ENCODE measurements at regions of chr2 and their contacts with region 1.

Region 1: DNA sequence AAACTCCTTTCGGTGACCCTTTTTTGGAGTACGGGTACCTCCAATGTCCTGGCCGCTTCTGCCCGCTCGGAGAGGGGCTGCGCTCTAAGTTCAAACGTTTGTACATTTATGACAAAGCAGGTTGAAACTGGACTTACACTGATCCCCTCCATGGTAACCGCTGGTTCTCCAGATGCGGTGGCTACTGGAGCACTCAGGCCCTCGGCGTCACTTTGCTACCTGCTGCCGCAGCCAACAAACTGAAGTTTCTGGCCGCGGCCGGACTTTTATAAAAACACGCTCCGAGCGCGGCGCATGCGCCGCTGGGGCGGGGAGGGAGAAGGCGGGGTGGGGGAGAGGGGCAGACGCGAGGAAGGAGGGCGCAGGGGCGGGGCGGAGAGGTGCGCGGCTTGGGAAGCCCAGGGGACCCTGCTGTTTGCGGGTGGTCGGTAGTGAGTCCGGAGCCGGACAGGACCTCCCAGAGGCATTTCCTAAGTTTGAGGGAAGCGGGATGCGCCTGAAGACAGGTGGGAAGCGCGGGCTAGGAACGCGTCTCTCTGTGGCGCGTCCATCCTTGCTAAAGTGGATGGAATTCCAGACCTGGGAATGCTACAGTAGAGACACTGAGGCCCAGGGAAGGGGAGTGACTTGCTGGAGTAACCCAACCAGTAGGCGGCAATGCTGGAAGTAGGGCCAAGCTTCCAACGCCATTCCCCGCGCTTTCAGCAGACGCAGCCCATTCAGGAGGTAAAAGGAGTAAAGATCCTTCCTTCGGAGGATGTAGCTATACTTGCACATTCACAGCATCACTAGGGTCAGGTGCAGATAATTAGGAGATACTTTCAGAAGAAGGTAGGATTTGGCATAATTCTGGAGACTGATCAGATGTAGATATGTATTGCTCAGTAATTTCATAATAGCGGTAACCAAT is at the start of gene CXCR4:
- DNase-seq: peak; percentile 85
- H3K4me3 Mint-ChIP-seq: peak within 1 kb of the TSS; percentile 97
- H3K27ac Mint-ChIP-seq: peak within 1 kb of the TSS; percentile 98
- H3K4me1 Mint-ChIP-seq: peaks cover 73% of the 10 kb centered on the region
- H3K27me3 Mint-ChIP-seq: peaks cover 31% of the 10 kb centered on the region
- total RNA-seq, gene CXCR4: 83.3 and 86.3 TPM in 2 replicates

Region 2: GRCh38 chr2:134918526-134919340 is 1199.4 kb before region 1 on chr2 and contains the start of gene CCNT2:
- intact Hi-C with region 1: loop called (anchors 2 kb)
- DNase-seq: peak; percentile 100
- H3K4me3 Mint-ChIP-seq: peak within 1 kb of the TSS; percentile 96
- H3K27ac Mint-ChIP-seq: peak within 1 kb of the TSS; percentile 97
- H3K4me1 Mint-ChIP-seq: peaks cover 28% of the 10 kb centered on the region
- H3K27me3 Mint-ChIP-seq: peaks cover 11% of the 10 kb centered on the region
- total RNA-seq, gene CCNT2: 41.4 and 43.7 TPM in 2 replicates

Region 3: GRCh38 chr2:135820003-135820618 is 298.1 kb before region 1 on chr2:
- intact Hi-C with region 1: loop called (anchors 5 kb)
- DNase-seq: peak; percentile 75
- H3K4me3 Mint-ChIP-seq: peak overlapping the region; percentile 80
- H3K27ac Mint-ChIP-seq: peak overlapping the region; percentile 89
- H3K4me1 Mint-ChIP-seq: peaks cover 52% of the 10 kb centered on the region
- H3K27me3 Mint-ChIP-seq: no peaks in the 10 kb centered on the region

Region 4: DNA sequence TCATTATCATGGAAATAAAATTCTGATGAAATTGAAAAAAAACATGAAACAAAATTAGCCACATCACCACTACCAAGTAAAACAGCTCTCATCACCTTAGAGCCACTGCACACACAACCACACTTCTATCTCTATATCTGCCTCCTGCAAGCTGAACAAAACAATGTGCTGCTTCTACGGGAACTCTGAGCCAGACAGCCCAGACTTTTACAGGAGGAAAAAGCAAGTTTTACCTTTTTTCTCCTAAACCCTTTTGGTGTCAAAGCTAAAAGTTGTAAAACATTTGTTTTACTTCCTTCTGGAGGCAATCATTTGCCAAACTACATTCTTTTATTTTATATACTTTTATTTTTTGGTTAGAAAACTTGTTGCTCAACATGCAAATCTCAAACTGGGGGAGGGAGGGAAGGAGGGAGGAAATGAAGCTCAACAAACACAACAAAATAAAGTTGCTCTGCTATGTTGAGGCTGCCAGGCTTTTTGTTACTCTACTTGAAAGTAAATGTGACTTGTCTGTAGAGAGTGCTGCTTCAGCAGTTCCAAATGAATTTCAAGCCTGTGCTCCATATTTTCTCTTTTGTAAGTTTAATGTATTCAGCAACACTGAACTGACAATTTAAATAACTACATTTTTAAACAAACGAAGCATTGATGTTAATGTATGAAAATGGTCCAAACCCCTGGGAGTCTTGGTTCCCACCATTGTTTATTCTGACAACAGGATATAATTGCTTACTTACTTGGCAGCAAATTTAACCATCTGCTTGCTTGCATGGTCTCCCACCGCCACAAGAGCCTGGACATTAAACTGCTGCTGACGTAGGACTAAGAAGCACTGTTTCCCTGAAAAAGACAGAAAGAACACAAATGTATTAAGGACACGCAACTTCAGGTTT is 157.3 kb before region 1 on chr2:
- intact Hi-C with region 1: loop called (anchors 1 kb)
- DNase-seq: peak; percentile 16
- H3K4me3 Mint-ChIP-seq: peak overlapping the region; percentile 28
- H3K27ac Mint-ChIP-seq: peak overlapping the region; percentile 80
- H3K4me1 Mint-ChIP-seq: peaks cover 55% of the 10 kb centered on the region
- H3K27me3 Mint-ChIP-seq: no peaks in the 10 kb centered on the region

Region 5: DNA sequence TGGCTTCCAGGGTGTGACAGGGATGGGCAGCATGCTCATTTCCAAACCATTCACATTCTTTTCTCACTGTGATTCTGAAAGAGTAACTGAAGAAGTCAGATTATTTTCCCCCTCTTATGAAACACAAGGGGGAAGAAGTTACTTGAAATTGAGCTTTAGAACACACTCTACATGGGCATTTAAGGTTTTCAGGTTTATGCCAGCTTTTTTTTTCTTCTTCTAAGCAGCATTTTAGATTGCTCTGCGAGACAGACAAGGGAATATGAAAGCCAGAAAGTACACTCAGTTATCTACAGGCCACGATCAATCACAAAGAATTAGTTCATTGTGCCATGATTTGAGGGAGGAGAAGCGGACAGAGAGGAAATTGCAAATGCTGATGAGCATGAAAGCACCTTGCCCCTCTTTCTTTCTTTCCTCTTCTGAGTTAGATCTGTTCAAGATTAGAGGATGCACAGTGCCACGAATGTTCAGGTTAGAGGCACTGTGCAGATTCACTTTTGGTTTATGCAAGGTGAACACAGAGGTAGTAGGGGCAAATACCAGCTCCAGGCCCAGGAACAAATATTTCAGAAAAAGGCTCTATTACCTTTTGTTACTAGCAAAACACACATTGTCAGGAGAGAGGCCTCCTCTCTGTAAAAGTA is 49.5 kb before region 1 on chr2:
- intact Hi-C with region 1: loop called (anchors 2 kb)
- DNase-seq: no peak
- H3K4me3 Mint-ChIP-seq: peak overlapping the region; percentile 49
- H3K27ac Mint-ChIP-seq: peak overlapping the region; percentile 46
- H3K4me1 Mint-ChIP-seq: peaks cover 63% of the 10 kb centered on the region
- H3K27me3 Mint-ChIP-seq: no peaks in the 10 kb centered on the region

Region 6: DNA sequence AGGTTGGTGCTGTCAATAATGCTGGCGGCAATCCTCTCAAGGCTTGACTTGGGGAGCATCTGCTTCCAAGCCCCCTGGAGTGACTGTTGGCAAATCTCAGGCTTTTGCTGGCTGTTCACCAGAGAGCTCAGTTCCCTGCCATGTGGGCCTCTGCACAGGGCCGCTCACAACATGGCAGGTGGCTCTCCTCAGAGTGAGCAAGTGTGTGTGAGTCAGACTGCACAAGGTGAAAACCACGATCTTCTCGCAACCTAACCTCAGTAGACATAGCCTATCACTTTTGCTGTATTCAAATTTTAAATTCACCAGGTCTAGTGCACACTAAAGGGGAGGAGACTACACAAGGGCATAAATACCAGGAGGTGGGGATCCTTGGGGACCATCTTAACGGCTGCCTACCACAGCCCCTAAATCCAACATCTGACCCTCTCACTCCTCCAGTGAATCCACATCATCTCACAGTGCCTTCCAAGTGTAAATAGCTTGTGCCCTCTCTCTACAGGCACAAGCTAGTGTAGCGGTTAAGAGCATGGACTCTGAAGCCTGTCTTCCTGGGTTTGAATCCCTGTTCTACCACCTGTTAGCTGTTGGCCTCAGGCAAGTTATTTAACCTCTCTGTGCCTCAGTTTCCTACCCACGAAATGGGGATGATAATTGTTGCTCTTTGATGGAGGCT is 187.5 kb after region 1 on chr2:
- intact Hi-C with region 1: loop called (anchors 2 kb)
- DNase-seq: peak; percentile 47
- H3K4me3 Mint-ChIP-seq: no peak overlapping the region
- H3K27ac Mint-ChIP-seq: peak overlapping the region; percentile 70
- H3K4me1 Mint-ChIP-seq: peaks cover 34% of the 10 kb centered on the region
- H3K27me3 Mint-ChIP-seq: peaks cover 2% of the 10 kb centered on the region

Region 7: GRCh38 chr2:136378712-136379595 is 260.8 kb after region 1 on chr2:
- intact Hi-C with region 1: loop called (anchors 1 kb)
- DNase-seq: peak; percentile 70
- H3K4me3 Mint-ChIP-seq: no peak overlapping the region
- H3K27ac Mint-ChIP-seq: no peak overlapping the region
- H3K4me1 Mint-ChIP-seq: peaks cover 80% of the 10 kb centered on the region
- H3K27me3 Mint-ChIP-seq: no peaks in the 10 kb centered on the region